T-cell (primary cell): ENCODE measurements at regions of chr15 and their contacts with region 1.

Region 1: GRCh38 chr15:89874926-89875564 is 18.7 kb downstream of the AP3S2 start:
- DNase-seq: peak; percentile 55 to 88 (median 77)
- ATAC-seq: peak; percentile 100
- H3K4me3 ChIP-seq: no peak overlapping the region
- H3K4me3 Mint-ChIP-seq: no peak overlapping the region
- H3K27ac ChIP-seq: no peak overlapping the region
- H3K27ac Mint-ChIP-seq: peak overlapping the region in 1 of 2 donors; percentile 44
- H3K4me1 ChIP-seq: peaks cover 0 to 4% of the 10 kb centered on the region in 2 experiments
- H3K4me1 Mint-ChIP-seq: peaks cover 4% of the 10 kb centered on the region in 3 donors
- H3K27me3 ChIP-seq: no peaks in the 10 kb centered on the region
- H3K27me3 Mint-ChIP-seq: no peaks in the 10 kb centered on the region

Region 2: DNA sequence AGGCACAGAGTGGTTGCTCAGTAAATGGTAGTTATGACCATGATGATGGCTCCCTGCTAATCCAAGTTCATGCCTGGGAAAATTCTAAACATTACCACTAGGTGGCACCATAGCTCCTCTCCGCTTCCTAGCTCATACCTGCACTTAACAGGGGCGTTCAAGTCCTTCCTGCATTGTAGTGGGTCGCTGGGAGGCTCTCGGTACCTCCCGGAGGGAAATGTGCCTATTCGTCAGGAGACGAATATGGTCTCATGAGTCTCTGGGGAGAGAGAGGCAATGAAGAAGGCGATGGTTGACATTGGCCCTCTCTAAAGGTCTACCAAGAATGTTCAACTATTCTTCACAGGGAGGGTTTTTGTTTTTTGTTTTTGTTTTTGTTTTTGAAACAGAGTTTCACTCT is 134.9 kb before region 1 on chr15:
- CTCF ChIA-PET with region 1: interaction called, 3 to 48 read pairs
- POLR2A ChIA-PET with region 1: no interaction called
- DNase-seq: peak in 30 of 35 experiments; percentile 16 to 82 (median 41)
- ATAC-seq: peak; percentile 79 to 91 (median 80)
- H3K4me3 ChIP-seq: no peak overlapping the region
- H3K4me3 Mint-ChIP-seq: no peak overlapping the region
- H3K27ac ChIP-seq: no peak overlapping the region
- H3K27ac Mint-ChIP-seq: no peak overlapping the region
- H3K4me1 ChIP-seq: peaks cover 0 to 4% of the 10 kb centered on the region in 2 experiments
- H3K4me1 Mint-ChIP-seq: peaks cover 0 to 2% (median 2%) of the 10 kb centered on the region in 3 donors
- H3K27me3 ChIP-seq: peaks cover 0 to 28% of the 10 kb centered on the region in 2 experiments
- H3K27me3 Mint-ChIP-seq: peaks cover 12 to 16% of the 10 kb centered on the region in 2 donors

Region 3: DNA sequence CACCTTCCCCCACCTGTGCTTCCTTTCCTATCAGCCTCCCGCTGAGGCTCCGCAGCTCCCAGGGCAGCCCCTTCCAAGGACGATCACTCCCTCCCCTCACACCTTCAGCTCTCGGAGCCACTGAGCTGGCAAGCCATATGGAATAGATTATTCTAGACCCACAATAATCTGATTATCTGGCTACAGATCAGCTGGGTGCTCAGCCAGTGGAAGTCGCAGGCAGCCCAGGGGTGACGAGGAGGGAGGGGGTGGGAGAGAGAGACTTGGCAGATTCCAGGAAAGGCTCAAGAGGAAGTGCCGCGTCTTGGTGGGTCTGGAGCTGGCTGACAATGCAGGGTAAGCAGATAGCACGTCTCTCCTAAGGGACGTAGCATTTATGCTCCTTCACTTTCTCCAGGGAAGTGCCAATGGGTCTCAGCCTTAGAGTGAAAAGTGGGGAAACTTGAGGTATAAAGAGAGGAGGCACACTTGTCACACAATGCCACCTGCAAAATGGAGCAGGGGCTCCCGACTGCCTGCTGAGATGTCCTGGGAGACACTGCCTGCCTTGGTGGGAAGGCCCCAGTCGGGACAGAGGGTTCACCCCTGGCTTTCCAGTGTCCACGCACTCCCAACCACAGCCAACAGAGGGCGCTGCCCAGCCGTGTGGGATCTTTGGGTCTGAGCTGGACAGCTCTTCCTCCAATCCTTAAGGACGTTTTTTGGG is 114.6 kb before region 1 on chr15:
- CTCF ChIA-PET with region 1: interaction called, 4 to 19 read pairs
- POLR2A ChIA-PET with region 1: no interaction called
- DNase-seq: peak in 31 of 35 experiments; percentile 19 to 74 (median 48)
- ATAC-seq: peak; percentile 67 to 79 (median 72)
- H3K4me3 ChIP-seq: no peak overlapping the region
- H3K4me3 Mint-ChIP-seq: no peak overlapping the region
- H3K27ac ChIP-seq: no peak overlapping the region
- H3K27ac Mint-ChIP-seq: no peak overlapping the region
- H3K4me1 ChIP-seq: peaks cover 0 to 5% of the 10 kb centered on the region in 2 experiments
- H3K4me1 Mint-ChIP-seq: no peaks in the 10 kb centered on the region
- H3K27me3 ChIP-seq: peaks cover 0 to 41% of the 10 kb centered on the region in 2 experiments
- H3K27me3 Mint-ChIP-seq: peaks cover 14% of the 10 kb centered on the region in 2 donors

Region 4: DNA sequence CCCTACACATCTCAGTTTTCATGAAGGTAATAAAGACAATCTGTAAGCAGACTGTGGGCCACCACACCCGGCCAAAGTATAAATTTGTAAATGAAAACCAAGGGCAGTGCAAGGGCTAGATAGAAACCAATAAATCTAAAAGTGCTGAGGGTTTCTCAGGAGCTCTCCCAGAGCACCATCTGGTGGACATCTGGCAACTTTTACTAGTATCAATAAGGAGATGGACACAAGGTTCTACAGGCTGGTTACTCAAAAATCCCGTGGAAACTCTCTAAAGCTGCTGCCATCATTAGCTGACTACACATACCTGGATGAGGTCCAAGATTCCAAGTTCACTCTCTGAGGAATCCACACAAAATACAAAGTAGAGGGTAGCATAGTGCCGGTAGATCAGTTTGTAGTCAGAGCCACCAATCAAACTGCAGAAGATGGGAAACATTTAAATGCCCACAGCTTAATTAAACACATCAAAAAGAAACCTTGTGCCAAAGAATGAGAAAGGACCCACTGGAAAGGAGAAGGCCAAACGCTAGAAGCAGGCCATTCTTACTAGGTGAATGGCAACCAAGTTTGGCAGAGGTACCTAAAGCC is 13.3 kb after region 1 on chr15:
- CTCF ChIA-PET with region 1: interaction called, 6 to 27 read pairs
- POLR2A ChIA-PET with region 1: interaction called, 3 to 12 read pairs
- DNase-seq: no peak
- ATAC-seq: no peak
- H3K4me3 ChIP-seq: no peak overlapping the region
- H3K4me3 Mint-ChIP-seq: no peak overlapping the region
- H3K27ac ChIP-seq: no peak overlapping the region
- H3K27ac Mint-ChIP-seq: no peak overlapping the region
- H3K4me1 ChIP-seq: peaks cover 12 to 18% of the 10 kb centered on the region in 2 experiments
- H3K4me1 Mint-ChIP-seq: peaks cover 28 to 32% (median 32%) of the 10 kb centered on the region in 3 donors
- H3K27me3 ChIP-seq: no peaks in the 10 kb centered on the region
- H3K27me3 Mint-ChIP-seq: no peaks in the 10 kb centered on the region

Region 5: DNA sequence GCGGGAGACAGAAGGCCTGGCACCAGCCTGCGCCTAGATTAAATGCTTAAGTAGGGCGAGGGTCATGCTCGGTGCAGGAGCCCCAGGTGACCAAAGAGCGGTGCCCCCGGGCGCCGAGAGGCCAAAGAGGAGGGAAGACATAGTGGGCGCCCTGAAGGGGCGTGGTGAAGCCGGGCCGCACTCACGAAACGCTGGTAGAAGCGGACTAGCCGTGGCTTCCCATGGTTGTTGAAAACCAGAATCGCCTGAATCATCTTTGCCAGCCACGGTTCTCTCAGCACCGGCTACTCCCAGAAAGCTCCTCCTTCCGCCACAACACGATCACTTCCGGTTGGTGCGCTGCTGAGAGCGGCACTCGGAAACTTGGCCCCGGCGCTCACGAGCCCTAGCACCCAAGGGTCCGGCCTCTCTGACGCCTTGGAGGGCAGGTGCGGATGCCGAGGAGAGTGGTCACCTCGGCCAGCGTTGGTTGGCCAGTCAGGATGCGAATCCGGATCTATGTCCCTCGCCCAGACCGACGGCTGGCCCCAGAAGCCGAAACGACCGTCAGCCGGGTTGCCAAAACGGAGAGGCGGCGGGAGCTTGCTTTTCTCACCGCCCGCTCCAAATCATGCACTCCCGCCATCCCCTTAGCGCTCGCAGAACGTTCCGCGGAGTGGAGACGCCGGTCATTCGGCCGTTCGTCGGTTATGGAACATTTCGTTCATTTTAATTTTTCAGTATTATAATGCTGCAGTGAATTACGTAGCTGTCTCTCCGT is 18.8 kb after region 1 on chr15 and contains the start of gene AP3S2:
- CTCF ChIA-PET with region 1: interaction called, 3 to 27 read pairs
- POLR2A ChIA-PET with region 1: interaction called, 3 to 12 read pairs
- DNase-seq: peak; percentile 74 to 92 (median 85)
- ATAC-seq: peak; percentile 94 to 97 (median 94)
- H3K4me3 ChIP-seq: peak within 1 kb of the TSS; percentile 95 to 99
- H3K4me3 Mint-ChIP-seq: peak within 1 kb of the TSS; percentile 95 to 98 (median 96)
- H3K27ac ChIP-seq: peak within 1 kb of the TSS; percentile 88
- H3K27ac Mint-ChIP-seq: peak within 1 kb of the TSS; percentile 95
- H3K4me1 ChIP-seq: peaks cover 13 to 28% of the 10 kb centered on the region in 2 experiments
- H3K4me1 Mint-ChIP-seq: peaks cover 42 to 50% (median 48%) of the 10 kb centered on the region in 3 donors
- H3K27me3 ChIP-seq: no peaks in the 10 kb centered on the region
- H3K27me3 Mint-ChIP-seq: no peaks in the 10 kb centered on the region
- total RNA-seq, gene AP3S2: 22.8 to 30.5 (median 24.9) TPM